GM10248 (cell line): ENCODE measurements at regions of chr11 and their contacts with region 1.

Region 1: DNA sequence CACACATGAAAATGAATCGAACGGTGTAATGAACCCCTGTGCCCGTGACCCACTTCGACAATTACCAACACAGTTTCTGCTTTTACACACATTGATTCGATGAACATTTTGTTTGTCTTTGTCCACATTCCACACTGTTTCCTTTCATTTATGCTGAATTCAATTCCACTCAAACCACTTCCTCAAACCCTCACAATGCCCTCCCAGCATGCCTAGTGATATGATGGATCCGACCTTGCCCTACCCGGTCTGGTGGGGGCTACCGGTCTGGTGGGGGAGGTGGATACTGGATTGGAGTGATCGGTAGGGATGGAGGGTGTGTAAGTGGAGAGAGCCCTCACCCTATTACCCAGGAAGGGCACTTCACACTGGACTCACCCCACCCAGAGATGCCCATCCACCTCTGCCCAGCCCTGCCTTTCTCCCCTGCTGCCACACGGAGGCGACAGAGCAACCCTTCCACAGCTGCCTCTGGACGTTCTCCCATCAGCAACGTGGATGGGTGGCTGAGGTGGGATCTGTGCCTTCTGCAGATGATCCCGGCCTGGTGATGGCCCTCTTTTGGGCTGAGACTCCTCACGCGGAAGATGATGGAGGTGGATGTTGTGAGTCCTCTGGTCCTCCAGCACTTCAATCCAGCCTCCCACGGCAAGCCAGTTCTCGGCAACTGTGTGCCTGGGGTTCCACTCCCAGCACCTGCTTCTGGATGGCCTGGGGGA is 33.0 kb upstream of the P2RY2 start:
- DNase-seq: peak; percentile 72
- CTCF ChIP-seq: peak; percentile 95

Region 2: DNA sequence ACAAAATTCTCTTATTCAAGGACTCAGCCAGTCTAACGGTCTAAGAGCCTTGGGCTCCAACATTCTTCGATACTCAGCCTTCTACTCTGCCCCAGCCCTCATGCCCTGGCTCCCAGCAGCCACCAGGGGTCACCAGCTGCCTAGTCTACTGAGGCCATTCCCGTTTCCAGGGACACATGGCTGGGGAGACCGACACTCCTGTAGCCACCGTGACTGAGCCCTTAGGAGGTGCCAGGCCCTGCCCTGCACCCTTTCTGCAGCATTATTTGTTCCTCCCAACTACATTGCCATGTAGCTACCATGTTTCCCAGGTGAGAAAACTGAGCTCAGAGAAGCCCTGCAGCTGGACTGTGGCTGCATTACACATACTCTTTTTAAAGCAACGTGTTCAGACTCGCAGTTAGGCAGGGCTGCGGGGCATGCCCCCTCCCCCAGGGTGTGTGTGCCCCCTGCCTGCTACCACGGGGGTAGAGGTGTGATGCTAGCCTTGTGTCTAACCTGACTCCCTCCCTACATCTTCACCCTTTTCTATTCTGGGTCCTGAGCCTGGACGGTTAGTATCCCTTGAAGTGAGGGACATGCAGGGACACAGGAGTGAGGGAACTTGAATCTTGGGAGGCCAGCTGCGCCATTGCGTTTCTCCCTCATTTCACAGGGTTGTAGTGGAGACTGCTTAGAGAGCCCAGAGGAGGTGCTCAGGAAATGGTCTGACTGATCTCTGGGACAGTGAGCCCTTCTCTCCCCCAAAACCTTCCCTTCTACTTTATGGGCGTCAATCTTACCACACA is 353.4 kb before region 1 on chr11:
- CTCF ChIA-PET with region 1: interaction called, 204 read pairs
- POLR2A ChIA-PET with region 1: no interaction called
- DNase-seq: no peak
- CTCF ChIP-seq: peak; percentile 87

Region 3: DNA sequence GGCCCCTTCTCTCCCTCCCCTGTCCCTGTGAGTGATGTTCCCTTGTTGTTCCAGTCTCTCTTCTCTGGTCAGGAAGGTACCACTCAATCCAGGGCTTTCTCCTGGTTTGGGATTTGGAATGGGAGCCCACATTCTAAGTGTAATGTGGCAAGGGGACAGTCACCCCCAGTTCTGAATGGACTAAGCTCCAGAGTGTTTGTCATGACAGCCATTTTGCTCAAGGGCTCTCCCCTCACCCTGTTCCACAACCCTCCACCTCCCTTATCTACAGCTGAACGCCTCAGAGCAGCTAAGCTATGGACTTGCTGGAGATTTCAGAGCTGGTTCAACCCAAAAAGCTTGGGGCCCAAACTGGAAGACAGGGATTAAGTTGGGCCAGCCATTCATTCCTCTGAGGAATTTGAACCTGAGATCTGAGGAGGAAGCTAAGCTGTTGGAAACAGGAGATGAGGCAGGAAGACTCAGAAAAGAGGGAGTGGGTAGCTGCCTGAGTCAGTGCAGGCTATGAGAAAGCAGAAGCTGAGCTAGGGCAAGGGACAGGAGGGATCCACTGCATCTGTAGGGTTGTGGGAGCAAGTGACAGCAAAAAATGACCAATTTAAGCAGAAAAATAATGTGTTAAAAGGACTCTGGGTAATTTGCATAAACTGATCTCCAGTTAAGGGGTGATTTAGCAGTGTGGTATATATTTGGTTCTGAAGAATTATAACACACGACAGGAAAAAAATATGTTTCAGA is 20.1 kb before region 1 on chr11:
- CTCF ChIA-PET with region 1: interaction called, 115 read pairs
- POLR2A ChIA-PET with region 1: no interaction called
- DNase-seq: no peak
- CTCF ChIP-seq: no peak

Region 4: DNA sequence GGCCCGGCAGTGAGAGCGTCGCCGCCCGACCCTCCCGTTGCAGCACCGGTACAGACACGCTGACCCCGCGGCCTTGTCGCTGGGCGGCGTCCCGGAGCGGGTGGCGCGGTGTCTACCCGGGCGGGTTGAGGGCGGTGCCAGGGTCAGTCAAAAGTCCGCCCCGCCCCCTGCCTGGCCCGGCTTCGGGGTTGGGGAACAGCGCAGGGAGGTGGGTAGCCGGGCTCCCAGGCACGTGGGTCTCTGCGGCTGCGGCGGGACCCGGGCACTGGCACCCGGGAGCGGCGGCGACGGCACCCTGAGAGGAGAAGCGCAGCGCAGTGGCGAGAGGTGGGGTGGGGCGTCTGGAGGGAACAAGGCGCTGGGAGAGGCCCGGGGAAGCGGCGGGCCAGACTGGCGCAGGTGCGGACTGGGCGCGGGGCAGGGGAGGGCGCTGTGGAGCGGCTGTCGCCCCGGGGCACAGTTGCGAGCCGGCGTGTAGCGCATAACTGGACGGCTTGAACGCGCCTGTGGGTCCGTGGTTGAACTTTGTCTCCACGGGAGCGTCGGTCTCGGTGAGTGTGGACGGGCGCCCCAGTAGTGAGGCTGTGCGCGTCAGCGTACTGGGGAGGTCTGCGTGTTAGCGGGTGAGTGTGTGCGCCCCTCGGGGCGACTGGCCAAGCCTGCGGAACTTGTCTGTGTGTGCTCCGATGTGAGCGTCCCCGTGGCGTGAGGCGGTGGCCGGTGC is 33.2 kb after region 1 on chr11 and contains the start of gene P2RY2:
- CTCF ChIA-PET with region 1: interaction called, 24 read pairs
- POLR2A ChIA-PET with region 1: no interaction called
- DNase-seq: peak; percentile 58
- CTCF ChIP-seq: peak; percentile 43

Region 5: DNA sequence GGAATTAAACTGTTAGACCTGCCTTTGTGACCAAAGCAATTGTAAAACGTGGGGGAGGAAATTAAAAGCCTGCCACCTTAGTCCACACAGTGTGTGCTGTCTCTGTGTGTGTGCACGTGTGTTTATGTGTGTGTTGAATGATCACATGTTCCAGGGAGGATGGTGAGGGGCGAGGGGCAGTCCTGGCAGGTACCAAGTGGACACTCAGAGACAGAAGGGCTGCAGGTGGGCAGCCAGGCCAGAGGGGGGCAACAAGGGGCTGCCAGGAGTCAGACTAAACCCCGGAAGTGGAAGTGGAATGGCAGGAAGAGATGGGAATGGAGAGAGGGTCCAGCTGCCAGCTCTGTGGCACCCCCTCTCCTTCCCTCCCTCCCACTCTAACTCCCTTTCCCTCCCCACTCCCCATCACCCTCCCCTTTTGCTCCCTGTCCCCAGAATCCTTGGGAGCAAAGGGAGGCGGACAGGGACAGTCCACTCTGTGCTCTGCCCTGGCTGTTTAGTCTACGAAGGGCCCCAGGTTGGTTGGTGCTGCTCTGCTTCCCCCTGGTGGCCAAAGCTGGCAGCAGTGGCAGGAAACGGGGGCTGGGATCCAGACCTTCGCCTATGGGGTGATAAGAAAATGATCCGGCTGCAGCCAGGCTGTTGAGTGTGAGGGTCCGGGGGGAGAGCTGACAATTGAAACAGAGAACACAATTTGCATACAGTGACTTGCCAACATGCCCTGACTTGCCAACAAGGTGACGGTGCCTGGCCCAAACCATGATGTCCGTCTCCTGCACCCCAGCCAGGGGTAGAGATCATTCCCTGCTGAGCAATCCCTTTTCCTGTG is 57.4 kb after region 1 on chr11:
- CTCF ChIA-PET with region 1: interaction called, 90 read pairs
- POLR2A ChIA-PET with region 1: no interaction called
- DNase-seq: peak; percentile 88
- CTCF ChIP-seq: peak; percentile 86

Region 6: DNA sequence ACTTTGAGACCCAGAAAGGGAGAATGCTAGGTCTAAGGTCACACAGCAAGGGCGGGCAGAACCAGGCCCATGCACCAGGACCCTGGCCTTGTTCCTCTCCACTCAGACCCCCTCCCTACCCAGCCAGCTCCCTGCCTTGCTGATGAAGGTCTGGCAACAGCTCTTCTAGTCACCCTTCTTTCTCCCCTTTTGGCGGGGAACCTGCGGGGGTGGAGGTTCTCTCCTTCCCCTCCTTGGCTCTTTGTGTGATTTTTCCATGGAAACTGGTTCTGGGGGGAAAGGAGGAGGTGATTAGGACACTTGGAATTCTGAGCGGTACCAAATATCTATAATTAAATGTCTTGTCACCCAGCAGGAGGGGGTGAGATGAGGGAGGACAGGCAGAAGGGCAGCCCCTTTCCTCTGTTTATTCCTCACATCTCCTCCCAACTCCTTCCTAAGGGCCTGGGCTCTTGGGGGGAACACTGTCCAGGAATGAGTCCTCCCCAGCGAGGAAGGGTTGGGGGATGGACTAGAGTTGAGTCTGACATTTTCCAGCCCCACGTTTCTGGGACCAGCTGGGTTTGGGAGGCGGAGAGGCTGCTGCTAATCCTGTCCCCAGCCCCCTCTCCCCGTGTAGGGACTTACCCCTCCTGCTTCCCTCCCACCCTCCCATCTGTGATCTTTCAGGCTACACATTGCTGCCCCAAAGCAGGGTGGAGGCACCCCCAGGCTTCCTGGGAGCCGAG is 130.3 kb after region 1 on chr11:
- CTCF ChIA-PET with region 1: no interaction called
- POLR2A ChIA-PET with region 1: no interaction called
- DNase-seq: no peak
- CTCF ChIP-seq: no peak

Region 7: DNA sequence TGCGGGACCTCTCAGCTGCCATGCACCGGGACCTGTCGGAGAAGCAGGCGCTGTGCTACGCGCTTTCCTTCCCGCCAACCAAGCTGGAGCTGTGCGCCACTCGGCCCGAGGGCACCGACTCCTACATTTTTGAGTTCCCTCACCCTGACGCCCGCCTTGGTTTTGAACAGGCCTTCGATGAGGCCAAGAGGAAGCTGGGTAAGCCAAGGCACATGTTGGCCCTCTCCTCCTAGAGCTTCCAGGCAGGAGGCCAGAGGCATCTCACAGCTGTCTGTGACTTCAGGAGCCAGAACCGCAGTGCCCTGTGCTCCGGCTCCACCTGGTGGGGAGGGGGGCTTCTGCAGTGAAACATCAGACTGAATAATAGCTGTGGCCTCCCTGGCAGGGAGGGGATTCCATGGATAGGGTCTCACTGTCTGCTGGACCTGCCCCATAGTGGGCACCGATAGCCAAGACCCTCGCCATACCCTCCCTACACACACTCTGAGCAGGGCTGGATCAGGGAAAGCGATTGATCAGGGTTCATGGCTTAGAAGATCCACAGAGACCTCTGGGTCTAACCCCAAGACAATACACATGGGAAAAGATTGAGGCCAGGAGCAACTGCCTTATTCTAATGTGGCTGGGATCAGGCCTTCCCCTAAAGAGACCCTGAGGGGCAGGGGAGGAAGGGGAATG is 175.4 kb after region 1 on chr11:
- CTCF ChIA-PET with region 1: no interaction called
- POLR2A ChIA-PET with region 1: no interaction called
- DNase-seq: no peak
- CTCF ChIP-seq: peak; percentile 32